Left colon (tissue), 2 donors: ENCODE measurements at regions of chr1 and their contacts with region 1.

Region 1: GRCh38 chr1:227140376-227140775 is 177.9 kb downstream of the CDC42BPA start:
- DNase-seq: no peak
- ATAC-seq: no peak

Region 2: GRCh38 chr1:226763905-226764264 is 376.5 kb before region 1 on chr1:
- intact Hi-C with region 1: no loop called
- DNase-seq: no peak
- ATAC-seq: no peak

Region 3: GRCh38 chr1:227192163-227192562 is 51.8 kb after region 1 on chr1:
- intact Hi-C with region 1: no loop called
- DNase-seq: peak; percentile 5 to 24
- ATAC-seq: no peak

Region 4: GRCh38 chr1:227318003-227318852 is 177.9 kb after region 1 on chr1 and contains the start of gene CDC42BPA:
- intact Hi-C with region 1: no loop called
- DNase-seq: peak; percentile 80 to 81
- ATAC-seq: peak; percentile 68
- total RNA-seq, gene CDC42BPA: 46.2 to 49.9 TPM

Region 5: GRCh38 chr1:227449051-227449450 is 308.7 kb after region 1 on chr1:
- intact Hi-C with region 1: loop called in 1 of 2 experiments (anchors 10 kb)
- DNase-seq: no peak
- ATAC-seq: peak; percentile 44